Activated T-helper 2 cell treated with anti-CD3 and anti-CD28 coated beads, Interferon-gamma antibody, Interleukin-2, Interleukin-4, amounts not matched to agents 10 μg/mL and 5 μg/mL and 100 μg/mL, durations not matched to agents 14 hours and 24 hours and 36 hours (primary cell): ENCODE measurements at regions of chr1 and their contacts with region 1.

Region 1: GRCh38 chr1:206803221-206803730 is 31.0 kb upstream of the IL10 start:
- DNase-seq: peak; percentile 81
- H3K4me3 Mint-ChIP-seq: no peak overlapping the region
- H3K27ac Mint-ChIP-seq: peak overlapping the region; percentile 81
- H3K4me1 Mint-ChIP-seq: peaks cover 77% of the 10 kb centered on the region
- H3K27me3 Mint-ChIP-seq: peaks cover 14% of the 10 kb centered on the region

Region 2: GRCh38 chr1:206734499-206735142 is 68.7 kb before region 1 on chr1:
- intact Hi-C with region 1: loop called (anchors 1 kb)
- DNase-seq: peak; percentile 63
- H3K4me3 Mint-ChIP-seq: no peak overlapping the region
- H3K27ac Mint-ChIP-seq: peak overlapping the region; percentile 40
- H3K4me1 Mint-ChIP-seq: peaks cover 47% of the 10 kb centered on the region
- H3K27me3 Mint-ChIP-seq: no peaks in the 10 kb centered on the region

Region 3: DNA sequence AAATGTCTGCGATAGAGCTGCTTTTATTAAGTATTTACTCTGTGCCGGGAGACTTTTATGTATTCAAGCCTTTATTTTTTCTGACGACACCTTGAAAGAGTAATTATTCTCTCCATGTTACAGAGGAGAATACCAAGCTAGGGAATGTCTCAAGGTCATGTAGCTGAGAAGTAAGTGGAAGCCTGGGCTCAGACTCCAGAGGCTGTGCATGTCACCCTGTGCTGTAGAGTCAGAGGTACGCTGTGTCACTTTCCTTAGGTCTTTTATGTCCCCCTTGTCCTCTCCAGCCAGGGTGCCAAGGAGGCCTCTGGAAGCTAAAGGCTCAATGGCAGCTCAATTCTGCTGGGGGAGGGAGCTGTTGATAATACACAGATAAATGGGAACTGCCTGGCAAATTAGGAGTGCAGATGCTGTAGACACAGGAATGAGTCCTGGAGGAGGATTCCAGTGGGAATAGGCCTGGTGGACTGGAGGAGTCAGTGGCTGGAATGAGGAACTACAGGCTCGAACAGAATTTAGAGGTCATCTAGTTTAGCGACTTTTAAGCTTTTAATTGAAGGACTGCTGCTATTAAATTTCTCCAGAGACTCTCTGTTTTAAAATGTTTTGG is 42.0 kb before region 1 on chr1:
- intact Hi-C with region 1: loop called (anchors 1 kb)
- DNase-seq: no peak
- H3K4me3 Mint-ChIP-seq: no peak overlapping the region
- H3K27ac Mint-ChIP-seq: no peak overlapping the region
- H3K4me1 Mint-ChIP-seq: peaks cover 30% of the 10 kb centered on the region
- H3K27me3 Mint-ChIP-seq: peaks cover 4% of the 10 kb centered on the region

Region 4: GRCh38 chr1:206766251-206766856 is 36.9 kb before region 1 on chr1:
- intact Hi-C with region 1: loop called (anchors 1 kb)
- DNase-seq: peak; percentile 69
- H3K4me3 Mint-ChIP-seq: no peak overlapping the region
- H3K27ac Mint-ChIP-seq: peak overlapping the region; percentile 69
- H3K4me1 Mint-ChIP-seq: peaks cover 65% of the 10 kb centered on the region
- H3K27me3 Mint-ChIP-seq: peaks cover 6% of the 10 kb centered on the region

Region 5: GRCh38 chr1:206784471-206784903 is 18.8 kb before region 1 on chr1:
- intact Hi-C with region 1: loop called (anchors 1 kb)
- DNase-seq: peak; percentile 88
- H3K4me3 Mint-ChIP-seq: peak overlapping the region; percentile 61
- H3K27ac Mint-ChIP-seq: peak overlapping the region; percentile 83
- H3K4me1 Mint-ChIP-seq: peaks cover 67% of the 10 kb centered on the region
- H3K27me3 Mint-ChIP-seq: peaks cover 5% of the 10 kb centered on the region

Region 6: DNA sequence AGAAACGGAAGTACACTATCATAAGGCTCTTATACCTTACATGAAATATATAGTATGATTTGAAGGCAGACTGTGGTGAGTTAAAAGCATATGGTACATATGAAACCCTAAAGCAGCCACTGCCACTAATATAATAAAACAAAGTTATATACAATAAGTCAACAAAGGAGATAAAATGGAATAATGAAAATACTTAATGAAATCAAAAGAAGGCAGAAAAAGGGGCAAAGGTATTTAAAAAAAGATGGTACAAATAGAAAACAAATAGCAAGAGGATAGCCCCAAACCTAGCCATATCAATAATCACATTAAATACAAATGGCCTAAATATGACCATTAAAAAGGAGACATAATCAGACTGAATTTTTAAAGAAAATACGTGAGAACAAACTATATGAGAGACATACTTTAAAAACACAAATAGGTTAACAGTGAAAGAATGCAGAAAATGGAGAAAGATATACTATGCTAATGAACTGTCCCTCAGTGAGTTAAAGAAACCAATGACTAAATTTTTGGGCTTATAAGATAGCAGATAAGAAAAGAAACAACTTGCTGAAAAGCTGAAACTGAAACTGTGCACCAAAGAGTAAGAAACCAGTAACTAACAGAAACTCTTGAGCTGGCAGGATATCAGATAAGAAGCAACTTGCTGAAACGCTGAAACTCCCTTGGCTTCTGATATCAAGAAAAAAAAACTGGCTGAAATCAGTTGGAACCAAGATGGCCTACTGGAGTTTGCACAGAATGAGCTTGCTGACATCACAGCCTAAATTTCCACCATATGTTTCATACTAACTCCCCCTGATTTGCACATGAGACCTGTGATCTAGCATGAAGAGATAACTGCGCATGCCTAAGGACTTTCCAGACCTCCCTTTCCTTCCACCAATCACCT is 13.4 kb after region 1 on chr1:
- intact Hi-C with region 1: loop called (anchors 1 kb)
- DNase-seq: peak; percentile 52
- H3K4me3 Mint-ChIP-seq: no peak overlapping the region
- H3K27ac Mint-ChIP-seq: peak overlapping the region; percentile 85
- H3K4me1 Mint-ChIP-seq: peaks cover 47% of the 10 kb centered on the region
- H3K27me3 Mint-ChIP-seq: no peaks in the 10 kb centered on the region

Region 7: DNA sequence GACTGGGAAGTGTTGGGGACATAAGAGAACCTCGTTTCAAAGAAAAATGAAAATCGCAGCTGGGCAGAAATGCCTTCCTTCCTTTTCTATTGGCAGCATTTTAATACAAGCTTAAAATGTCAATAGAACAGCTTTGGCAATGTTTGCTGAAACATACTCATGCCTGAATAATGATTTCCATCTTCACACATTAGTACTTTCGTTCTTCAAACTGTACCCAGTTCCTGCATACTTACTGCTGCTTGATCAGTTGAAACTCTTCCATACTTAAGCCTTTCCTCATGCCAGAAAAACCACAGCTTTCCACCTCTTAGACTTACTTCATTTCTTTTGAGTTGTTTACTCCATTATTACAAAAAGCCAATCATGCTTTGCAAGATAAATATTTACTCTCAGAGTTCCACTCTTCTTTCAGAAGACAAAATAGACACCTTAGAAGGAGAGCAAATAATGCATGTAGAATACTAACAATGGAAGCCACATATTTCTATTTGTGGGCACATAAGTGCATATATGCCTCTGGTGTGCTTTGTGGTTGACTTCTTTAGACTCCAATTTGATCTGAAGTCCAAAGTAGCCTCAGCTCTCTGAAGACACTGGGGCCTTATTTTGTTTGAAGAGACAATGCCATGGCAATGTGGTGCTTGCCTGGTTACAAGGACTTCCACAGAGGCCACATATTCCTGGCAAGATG is 495.5 kb after region 1 on chr1:
- intact Hi-C with region 1: no loop called
- DNase-seq: no peak
- H3K4me3 Mint-ChIP-seq: no peak overlapping the region
- H3K27ac Mint-ChIP-seq: no peak overlapping the region
- H3K4me1 Mint-ChIP-seq: peaks cover 13% of the 10 kb centered on the region
- H3K27me3 Mint-ChIP-seq: no peaks in the 10 kb centered on the region